ENCODE measurements at regions of chr4 and their contacts with region 1.

Region 1: GRCh38 chr4:175891851-175892250 is 79.8 kb upstream of the GPM6A start:
- DNase-seq: no peak
- ATAC-seq: no peak
- H3K4me3 ChIP-seq: no peak overlapping the region
- H3K27ac ChIP-seq: no peak overlapping the region
- H3K4me1 ChIP-seq: no peaks in the 10 kb centered on the region
- H3K27me3 ChIP-seq: no peaks in the 10 kb centered on the region
- CTCF ChIP-seq: peak in 10 of 12 donors; percentile 9 to 53 (median 37)
- POLR2A ChIP-seq: no peak

Region 2: DNA sequence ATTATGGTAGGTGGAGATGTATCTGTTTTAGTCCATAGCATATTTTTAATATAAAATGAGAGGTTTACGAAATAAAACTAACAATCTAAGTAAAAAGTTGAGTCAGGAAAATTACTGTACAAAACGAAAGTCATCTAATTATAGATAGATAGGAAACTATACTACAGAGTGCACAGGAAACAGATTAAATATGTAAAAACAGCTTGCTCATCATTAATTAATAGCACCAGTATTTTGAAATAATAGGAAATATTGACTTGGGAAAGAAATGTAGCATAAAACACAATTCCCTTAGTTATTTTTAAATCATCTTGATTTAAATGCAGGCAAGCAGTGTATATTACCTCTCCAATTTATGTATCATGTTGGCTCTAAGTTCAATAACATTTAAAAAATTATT is 307.7 kb before region 1 on chr4:
- intact Hi-C with region 1: loop called in 1 of 10 experiments (anchors 10 kb)
- DNase-seq: no peak
- ATAC-seq: no peak
- H3K4me3 ChIP-seq: no peak overlapping the region
- H3K27ac ChIP-seq: no peak overlapping the region
- H3K4me1 ChIP-seq: no peaks in the 10 kb centered on the region
- H3K27me3 ChIP-seq: no peaks in the 10 kb centered on the region
- CTCF ChIP-seq: no peak
- POLR2A ChIP-seq: no peak

Region 3: DNA sequence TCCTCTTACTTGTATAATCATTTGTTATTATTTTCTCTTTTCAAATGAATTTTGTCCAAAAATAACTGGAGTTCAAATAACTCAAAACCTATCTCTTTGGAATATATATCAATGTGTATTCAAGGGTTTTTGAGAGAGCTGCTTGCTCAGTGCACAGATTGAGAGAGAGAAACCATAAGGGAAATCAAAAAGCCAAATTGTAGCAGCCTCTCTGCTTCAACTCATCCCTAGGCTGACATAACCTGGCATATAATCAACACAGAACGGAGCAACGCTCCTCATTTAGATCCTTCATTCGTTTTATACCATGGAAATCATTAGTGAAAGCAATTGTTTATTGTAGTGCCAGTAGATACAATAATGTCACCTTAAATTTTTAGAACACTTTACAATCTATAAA is 78.0 kb before region 1 on chr4:
- intact Hi-C with region 1: no loop called
- DNase-seq: no peak
- ATAC-seq: no peak
- H3K4me3 ChIP-seq: no peak overlapping the region
- H3K27ac ChIP-seq: no peak overlapping the region
- H3K4me1 ChIP-seq: no peaks in the 10 kb centered on the region
- H3K27me3 ChIP-seq: no peaks in the 10 kb centered on the region
- CTCF ChIP-seq: no peak
- POLR2A ChIP-seq: no peak

Region 4: DNA sequence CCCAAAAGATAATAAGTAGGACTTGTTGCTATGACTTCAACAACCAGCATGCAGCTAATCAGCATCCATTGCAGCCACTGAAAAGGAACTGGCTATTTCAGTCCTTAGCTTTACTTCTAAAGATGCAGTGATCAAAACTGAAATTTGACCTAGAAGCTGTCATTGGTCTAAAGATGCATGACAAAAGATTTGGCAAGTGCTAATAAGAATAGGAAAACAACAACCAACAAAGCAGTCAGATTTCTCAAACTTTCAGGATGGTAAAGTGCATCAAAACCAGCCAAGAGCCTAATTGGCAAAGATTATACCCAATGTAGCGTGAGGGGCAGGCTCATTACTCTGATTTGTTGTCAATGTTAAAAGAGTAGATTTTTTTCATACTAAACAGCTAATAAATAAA is 96.7 kb after region 1 on chr4:
- intact Hi-C with region 1: no loop called
- DNase-seq: no peak
- ATAC-seq: no peak
- H3K4me3 ChIP-seq: no peak overlapping the region
- H3K27ac ChIP-seq: no peak overlapping the region
- H3K4me1 ChIP-seq: no peaks in the 10 kb centered on the region
- H3K27me3 ChIP-seq: peaks cover 0 to 6% (median 0%) of the 10 kb centered on the region in 9 donors
- CTCF ChIP-seq: no peak
- POLR2A ChIP-seq: no peak

Measured in heart left ventricle (tissue), 16 donors.